ENCODE measurements at regions of chr2 and their contacts with region 1.

Region 1: GRCh38 chr2:162244541-162245031 is 1.3 kb upstream of the FAP start:
- DNase-seq: peak in 1 of 2 donors; percentile 29
- ATAC-seq: peak in 3 of 4 donors; percentile 59 to 66 (median 66)
- H3K4me3 ChIP-seq: no peak overlapping the region
- H3K27ac ChIP-seq: no peak overlapping the region
- H3K4me1 ChIP-seq: peaks cover 5% of the 10 kb centered on the region
- H3K27me3 ChIP-seq: no peaks in the 10 kb centered on the region
- CTCF ChIP-seq: no peak

Region 2: GRCh38 chr2:162267496-162267895 is 22.9 kb after region 1 on chr2:
- intact Hi-C with region 1: loop called in 1 of 2 experiments (anchors 1 kb)
- DNase-seq: no peak
- ATAC-seq: no peak
- H3K4me3 ChIP-seq: no peak overlapping the region
- H3K27ac ChIP-seq: no peak overlapping the region
- H3K4me1 ChIP-seq: no peaks in the 10 kb centered on the region
- H3K27me3 ChIP-seq: no peaks in the 10 kb centered on the region
- CTCF ChIP-seq: no peak

Measured in psoas muscle (tissue), 8 donors.